ENCODE measurements at regions of chr2 and their contacts with region 1.

Region 1: GRCh38 chr2:223760838-223761502 is 76.4 kb downstream of the AP1S3 start:
- DNase-seq: peak; percentile 98
- H3K4me3 Mint-ChIP-seq: no peak overlapping the region
- H3K27ac Mint-ChIP-seq: peak overlapping the region; percentile 94
- H3K4me1 Mint-ChIP-seq: peaks cover 27% of the 10 kb centered on the region
- H3K27me3 Mint-ChIP-seq: no peaks in the 10 kb centered on the region
- CTCF ChIP-seq: peak; percentile 24

Region 2: DNA sequence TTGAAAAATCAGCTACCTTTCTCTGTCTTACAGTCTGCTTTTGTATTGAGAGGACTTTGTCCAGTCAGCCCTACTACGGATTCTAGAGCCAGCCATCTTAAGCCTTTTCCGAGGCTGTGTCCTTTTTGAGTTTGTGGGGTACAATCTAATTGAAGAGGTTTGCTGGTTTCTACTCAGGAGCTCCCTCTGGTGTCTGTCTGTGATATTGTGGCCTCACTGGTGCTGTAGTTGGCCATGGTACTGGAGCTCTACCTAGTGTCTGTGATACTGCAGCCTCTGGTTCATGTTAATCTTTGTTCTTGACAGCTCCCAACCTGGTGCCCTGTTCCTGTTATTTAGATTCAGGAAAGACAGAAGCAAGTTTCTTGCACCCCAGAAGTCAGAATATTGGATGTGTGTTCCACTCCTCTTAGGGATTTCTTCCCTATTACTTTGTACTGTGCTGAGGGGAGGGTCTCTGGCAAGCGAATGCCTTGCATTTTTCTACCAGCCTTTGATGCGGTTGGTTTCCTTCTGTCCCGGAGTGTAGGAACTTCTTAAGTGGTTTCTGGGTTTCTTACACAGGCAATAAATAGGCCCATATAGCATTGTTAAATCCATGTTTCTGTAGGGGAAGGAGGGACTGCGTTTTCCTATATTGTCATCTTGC is 821.6 kb before region 1 on chr2:
- CTCF ChIA-PET with region 1: no interaction called
- POLR2A ChIA-PET with region 1: no interaction called
- intact Hi-C with region 1: no loop called
- DNase-seq: peak; percentile 81
- H3K4me3 Mint-ChIP-seq: no peak overlapping the region
- H3K27ac Mint-ChIP-seq: peak overlapping the region; percentile 0
- H3K4me1 Mint-ChIP-seq: peaks cover 7% of the 10 kb centered on the region
- H3K27me3 Mint-ChIP-seq: no peaks in the 10 kb centered on the region
- CTCF ChIP-seq: peak; percentile 82

Region 3: GRCh38 chr2:223692191-223692947 is 68.6 kb before region 1 on chr2:
- CTCF ChIA-PET with region 1: interaction called, 4 read pairs
- POLR2A ChIA-PET with region 1: interaction called, 66 read pairs
- intact Hi-C with region 1: loop called (anchors 1 kb)
- DNase-seq: peak; percentile 84
- H3K4me3 Mint-ChIP-seq: no peak overlapping the region
- H3K27ac Mint-ChIP-seq: no peak overlapping the region
- H3K4me1 Mint-ChIP-seq: peaks cover 16% of the 10 kb centered on the region
- H3K27me3 Mint-ChIP-seq: no peaks in the 10 kb centered on the region
- CTCF ChIP-seq: peak; percentile 50

Region 4: DNA sequence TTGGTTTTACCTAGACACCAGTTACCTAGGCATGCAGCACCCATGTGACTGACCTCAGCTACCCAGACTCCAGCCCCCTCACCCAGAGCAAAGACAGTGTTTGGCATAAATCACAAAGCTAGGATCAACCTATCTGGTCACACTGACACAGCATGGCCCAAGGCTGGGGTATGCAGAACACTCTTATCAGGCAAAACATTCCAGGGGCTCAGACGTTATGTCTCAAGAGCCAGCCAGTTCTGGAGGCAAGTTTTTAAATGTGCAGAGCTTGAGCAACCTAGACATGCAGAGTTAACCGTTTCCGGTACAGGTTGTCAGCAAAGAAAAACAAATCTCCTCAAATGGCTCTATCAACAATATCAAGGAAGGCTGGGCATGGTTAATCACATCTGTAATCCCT is 16.4 kb before region 1 on chr2:
- CTCF ChIA-PET with region 1: interaction called, 3 read pairs
- POLR2A ChIA-PET with region 1: interaction called, 31 read pairs
- intact Hi-C with region 1: no loop called
- DNase-seq: no peak
- H3K4me3 Mint-ChIP-seq: no peak overlapping the region
- H3K27ac Mint-ChIP-seq: no peak overlapping the region
- H3K4me1 Mint-ChIP-seq: peaks cover 10% of the 10 kb centered on the region
- H3K27me3 Mint-ChIP-seq: no peaks in the 10 kb centered on the region
- CTCF ChIP-seq: no peak

Region 5: DNA sequence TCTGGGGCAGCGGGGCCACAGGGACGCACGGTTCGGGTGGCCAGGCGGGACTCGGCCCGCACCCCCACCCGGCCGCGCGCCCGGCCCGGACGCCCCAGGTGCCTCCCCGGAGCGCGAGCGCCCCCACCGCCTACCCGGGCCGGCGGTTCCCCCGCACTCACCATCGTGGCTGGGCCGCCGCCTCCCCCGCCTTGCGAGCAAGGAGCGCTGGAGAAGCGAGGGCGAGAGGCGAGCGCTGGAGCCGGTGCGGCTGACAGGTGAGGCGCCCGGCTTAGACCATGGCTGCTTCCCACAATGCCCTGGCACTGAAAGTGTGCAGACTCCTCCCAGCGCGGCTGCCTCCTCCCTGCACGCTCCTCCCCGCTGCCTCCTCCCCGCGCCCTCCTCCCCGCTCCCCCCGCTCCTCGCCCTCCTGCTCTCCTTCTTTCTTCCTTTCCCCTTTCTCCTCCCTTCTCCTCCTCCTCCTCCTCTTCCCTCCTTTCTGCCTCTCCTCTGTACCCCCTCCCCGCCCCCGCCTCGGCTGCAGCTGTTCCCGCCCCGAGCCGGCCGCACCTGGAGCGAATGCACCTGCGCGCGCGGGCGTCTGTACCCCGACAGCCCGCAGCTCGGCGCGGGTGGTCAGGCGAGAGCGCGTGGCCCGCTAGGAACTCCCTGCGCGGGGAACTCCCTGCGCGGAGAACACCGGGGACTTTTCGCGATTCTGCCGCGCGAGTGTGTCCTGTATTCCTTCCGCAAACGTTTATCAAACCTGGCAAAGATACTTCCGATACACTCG is 76.5 kb after region 1 on chr2 and contains the start of gene AP1S3:
- CTCF ChIA-PET with region 1: interaction called, 4 read pairs
- POLR2A ChIA-PET with region 1: interaction called, 21 read pairs
- intact Hi-C with region 1: no loop called
- DNase-seq: peak; percentile 83
- H3K4me3 Mint-ChIP-seq: peak within 1 kb of the TSS; percentile 95
- H3K27ac Mint-ChIP-seq: peak within 1 kb of the TSS; percentile 63
- H3K4me1 Mint-ChIP-seq: peaks cover 22% of the 10 kb centered on the region
- H3K27me3 Mint-ChIP-seq: no peaks in the 10 kb centered on the region
- CTCF ChIP-seq: no peak
- total RNA-seq, gene AP1S3: 56.9 and 57.7 TPM in 2 replicates

Region 6: DNA sequence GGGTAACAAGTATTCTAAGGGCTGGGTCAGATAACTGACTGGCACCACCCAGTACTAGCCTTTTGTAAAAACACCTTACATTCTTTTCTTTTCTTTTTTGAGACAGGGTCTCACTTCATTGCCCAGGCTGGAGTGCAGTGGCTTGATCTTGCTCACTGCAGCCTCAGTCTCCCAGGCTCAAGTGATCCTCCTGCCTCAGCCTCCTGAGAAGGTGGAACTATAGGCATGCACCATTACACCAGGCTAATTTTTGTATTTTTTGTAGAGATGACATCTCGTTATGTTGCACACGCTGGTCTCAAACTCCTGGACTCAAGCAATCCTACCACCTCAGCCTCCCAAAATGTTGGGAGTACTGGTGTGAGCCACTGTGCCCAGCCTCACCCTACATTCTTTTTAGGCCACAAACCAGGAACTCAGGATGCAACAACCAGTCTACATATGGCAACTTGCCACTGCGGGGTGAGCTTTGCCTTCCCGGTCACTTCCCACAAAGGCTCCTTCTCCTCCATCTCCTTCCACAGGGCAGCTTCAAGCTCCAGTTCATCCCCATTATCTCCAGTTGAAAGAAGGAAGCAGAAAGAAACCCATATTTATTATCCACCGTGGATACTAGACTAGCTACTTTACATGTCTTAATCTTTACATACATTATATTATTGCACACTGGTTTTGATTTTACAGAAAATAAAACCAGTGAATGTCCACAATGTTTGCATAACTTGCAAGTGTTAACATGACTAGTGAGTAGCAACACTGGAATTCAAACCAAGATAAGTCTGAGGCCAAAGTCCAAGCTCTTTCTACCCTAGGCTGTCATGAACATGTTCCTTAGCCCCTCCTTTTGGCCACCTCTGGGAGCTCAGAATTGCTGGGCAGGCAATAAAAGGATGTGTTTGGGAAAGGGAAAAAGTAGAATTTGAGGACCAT is 100.1 kb after region 1 on chr2:
- CTCF ChIA-PET with region 1: interaction called, 5 read pairs
- POLR2A ChIA-PET with region 1: interaction called, 8 read pairs
- intact Hi-C with region 1: loop called (anchors 2 kb)
- DNase-seq: peak; percentile 94
- H3K4me3 Mint-ChIP-seq: peak overlapping the region; percentile 66
- H3K27ac Mint-ChIP-seq: peak overlapping the region; percentile 96
- H3K4me1 Mint-ChIP-seq: peaks cover 15% of the 10 kb centered on the region
- H3K27me3 Mint-ChIP-seq: no peaks in the 10 kb centered on the region
- CTCF ChIP-seq: no peak

Measured in MCF 10A (cell line).